ENCODE measurements at regions of chr18 and their contacts with region 1.

Region 1: GRCh38 chr18:23703057-23703986 is 14.1 kb downstream of the LAMA3 start:
- DNase-seq: no peak
- ATAC-seq: no peak
- H3K4me3 Mint-ChIP-seq: no peak overlapping the region
- H3K27ac Mint-ChIP-seq: no peak overlapping the region
- H3K4me1 Mint-ChIP-seq: peaks cover 6% of the 10 kb centered on the region
- H3K27me3 Mint-ChIP-seq: peaks cover 25% of the 10 kb centered on the region
- CTCF ChIP-seq: no peak

Region 2: GRCh38 chr18:23619388-23619881 is 83.9 kb before region 1 on chr18:
- CTCF ChIA-PET with region 1: interaction called, 3 read pairs
- POLR2A ChIA-PET with region 1: no interaction called
- intact Hi-C with region 1: loop called (anchors 1 kb)
- DNase-seq: peak; percentile 18
- ATAC-seq: peak; percentile 36
- H3K4me3 Mint-ChIP-seq: peak overlapping the region; percentile 63
- H3K27ac Mint-ChIP-seq: no peak overlapping the region
- H3K4me1 Mint-ChIP-seq: peaks cover 17% of the 10 kb centered on the region
- H3K27me3 Mint-ChIP-seq: peaks cover 34% of the 10 kb centered on the region
- CTCF ChIP-seq: no peak

Region 3: DNA sequence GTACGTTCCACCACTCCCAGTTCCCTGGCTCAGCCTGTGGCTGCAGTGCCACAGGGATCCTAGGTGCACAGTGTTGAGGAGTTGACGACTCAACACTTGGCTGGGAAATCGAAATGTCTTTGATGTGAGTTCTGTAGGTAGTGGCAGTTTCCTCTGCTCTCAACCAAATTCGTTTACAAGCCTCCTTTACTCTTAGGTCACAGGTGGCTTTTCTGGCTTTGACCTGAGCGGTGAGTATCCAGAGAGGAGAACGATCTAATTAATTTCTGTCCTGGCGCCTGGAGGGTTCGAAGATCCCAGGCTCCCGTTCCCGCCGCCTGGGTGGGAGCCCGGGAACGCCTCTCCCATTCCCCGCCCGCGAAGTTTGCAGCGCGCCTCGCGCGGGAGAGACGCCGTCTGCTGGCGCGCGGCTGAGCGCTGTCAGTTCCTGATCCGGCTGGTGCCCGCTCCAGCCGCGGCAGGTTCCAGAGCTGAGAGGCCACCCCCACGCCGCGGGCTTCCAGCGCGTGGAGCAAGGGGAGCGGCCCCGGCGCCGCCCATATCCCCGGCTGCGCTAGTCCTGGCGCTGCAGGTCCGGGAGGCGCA is 14.2 kb before region 1 on chr18 and contains the start of gene LAMA3:
- CTCF ChIA-PET with region 1: no interaction called
- POLR2A ChIA-PET with region 1: no interaction called
- intact Hi-C with region 1: no loop called
- DNase-seq: no peak
- ATAC-seq: no peak
- H3K4me3 Mint-ChIP-seq: peak within 1 kb of the TSS; percentile 55
- H3K27ac Mint-ChIP-seq: no peak within 1 kb of the TSS
- H3K4me1 Mint-ChIP-seq: peaks cover 10% of the 10 kb centered on the region
- H3K27me3 Mint-ChIP-seq: peaks cover 30% of the 10 kb centered on the region
- CTCF ChIP-seq: no peak
- total RNA-seq, gene LAMA3: 0.07 TPM in 1 of 2 replicates, not detected in the other

Region 4: DNA sequence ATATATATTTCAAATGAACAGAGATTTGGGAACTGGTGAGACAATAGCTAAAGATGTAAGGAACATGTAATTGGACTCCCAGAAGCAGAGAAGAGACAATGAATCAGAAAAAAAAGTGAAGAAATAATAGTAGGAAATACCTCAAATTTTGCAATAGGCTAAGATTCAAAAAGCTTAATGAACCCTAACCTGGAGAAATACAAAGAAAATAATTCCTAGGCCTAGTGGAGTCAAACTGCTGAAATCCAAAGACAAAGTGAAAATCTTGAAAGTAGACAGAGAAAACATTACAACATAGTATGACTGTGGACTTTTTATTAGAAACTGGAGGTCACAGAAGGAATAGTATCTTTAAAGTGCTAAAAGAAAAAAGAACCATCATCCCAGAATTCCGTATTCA is 62.6 kb after region 1 on chr18:
- CTCF ChIA-PET with region 1: no interaction called
- POLR2A ChIA-PET with region 1: no interaction called
- intact Hi-C with region 1: no loop called
- DNase-seq: no peak
- ATAC-seq: no peak
- H3K4me3 Mint-ChIP-seq: no peak overlapping the region
- H3K27ac Mint-ChIP-seq: no peak overlapping the region
- H3K4me1 Mint-ChIP-seq: no peaks in the 10 kb centered on the region
- H3K27me3 Mint-ChIP-seq: peaks cover 17% of the 10 kb centered on the region
- CTCF ChIP-seq: no peak

Region 5: DNA sequence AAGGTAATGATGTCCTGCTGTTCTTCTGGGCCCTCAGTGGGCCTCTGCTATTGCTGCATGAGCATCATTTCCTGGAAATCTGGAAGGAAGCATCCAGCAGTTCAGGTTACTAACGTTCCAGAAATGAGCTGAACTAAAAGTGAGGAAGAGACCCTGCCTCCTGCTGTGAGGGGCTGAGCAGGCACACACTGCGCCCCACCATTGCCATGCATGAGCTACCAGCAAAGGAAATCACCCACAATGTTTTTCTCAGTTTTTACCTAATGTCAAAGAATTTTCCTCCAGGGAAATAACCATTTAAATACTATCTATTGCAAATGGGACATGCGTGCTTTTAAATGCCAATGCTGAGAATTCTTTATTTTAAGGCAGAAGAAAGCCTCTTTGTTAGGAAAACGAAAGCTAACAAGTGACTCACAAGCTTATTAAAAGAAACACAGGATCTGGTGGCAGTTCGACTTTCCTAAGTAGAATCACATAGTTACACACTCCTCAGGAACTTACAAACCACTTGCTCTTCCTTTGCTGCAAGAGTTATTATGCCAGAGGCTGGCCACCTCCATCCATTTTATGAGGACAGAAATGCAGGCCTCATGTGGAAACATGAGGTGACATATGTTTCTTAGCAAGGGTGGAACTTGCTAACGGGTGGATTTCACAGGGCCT is 158.6 kb after region 1 on chr18:
- CTCF ChIA-PET with region 1: no interaction called
- POLR2A ChIA-PET with region 1: no interaction called
- intact Hi-C with region 1: no loop called
- DNase-seq: no peak
- ATAC-seq: no peak
- H3K4me3 Mint-ChIP-seq: no peak overlapping the region
- H3K27ac Mint-ChIP-seq: peak overlapping the region; percentile 52
- H3K4me1 Mint-ChIP-seq: peaks cover 73% of the 10 kb centered on the region
- H3K27me3 Mint-ChIP-seq: no peaks in the 10 kb centered on the region
- CTCF ChIP-seq: no peak